ENCODE measurements at regions of chr17 and their contacts with region 1.

Region 1: DNA sequence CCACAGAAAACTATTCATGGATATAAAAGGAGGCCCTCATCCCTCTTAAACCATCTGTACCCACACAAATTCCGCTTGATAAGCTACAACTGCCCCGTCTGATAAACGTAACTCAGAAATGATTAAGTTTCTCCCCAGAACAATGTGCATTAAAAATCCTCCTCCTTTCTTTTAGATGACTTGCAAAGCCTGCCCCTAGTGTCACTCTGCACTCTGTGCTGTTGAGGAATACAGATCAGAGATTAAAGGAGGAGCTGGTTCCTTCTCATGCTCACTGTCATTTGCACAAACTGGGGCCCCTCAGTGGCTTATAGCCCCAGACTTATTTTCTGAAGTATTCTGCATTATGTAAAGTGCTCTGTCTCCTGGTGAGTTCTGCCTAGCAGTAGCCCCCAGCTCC is 33.3 kb downstream of the CDRT15 start:
- DNase-seq: no peak
- ATAC-seq: no peak

Region 2: GRCh38 chr17:14048169-14048568 is 155.2 kb before region 1 on chr17:
- intact Hi-C with region 1: no loop called
- DNase-seq: no peak
- ATAC-seq: no peak

Region 3: DNA sequence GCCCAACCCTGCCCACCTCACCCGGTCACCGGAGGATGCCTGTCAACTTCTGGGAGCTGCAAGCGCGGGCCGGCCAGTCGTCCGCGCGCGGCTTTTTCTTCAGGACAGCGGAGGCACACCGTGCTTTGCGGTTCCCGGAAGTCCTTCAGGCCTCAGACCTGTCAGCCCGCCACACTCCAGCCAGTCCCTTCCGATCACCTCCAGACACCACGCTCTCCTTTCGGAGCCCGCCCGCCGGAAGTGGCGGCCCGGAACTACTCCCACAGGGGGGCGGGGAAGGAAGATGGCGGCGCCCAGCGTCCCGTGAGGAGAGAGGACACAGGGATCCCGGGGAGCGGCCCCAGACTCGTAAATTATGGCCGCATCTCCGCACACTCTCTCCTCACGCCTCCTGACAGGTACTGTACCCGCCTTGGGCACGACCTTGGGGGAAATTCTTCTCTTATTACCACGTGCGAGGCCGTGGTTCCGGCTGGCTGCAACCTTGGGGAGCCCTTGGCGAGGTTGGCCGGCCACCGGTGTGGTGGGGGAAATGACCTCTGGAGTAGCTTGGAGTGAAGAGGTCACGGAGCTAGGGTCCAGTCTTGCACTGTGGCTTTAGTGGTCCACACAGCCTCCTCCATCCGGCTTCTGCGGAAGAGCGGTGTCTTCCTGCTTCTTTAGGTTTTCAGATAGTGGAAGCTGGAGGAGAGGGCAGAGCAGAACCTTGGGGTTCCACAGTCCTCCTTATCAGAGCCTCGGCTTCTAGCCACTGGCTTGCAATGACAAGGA is 134.0 kb before region 1 on chr17 and contains the start of gene COX10:
- intact Hi-C with region 1: loop called (anchors 10 kb)
- DNase-seq: peak; percentile 93
- ATAC-seq: peak; percentile 99
- total RNA-seq, gene COX10: 39.4 TPM

Region 4: GRCh38 chr17:14222620-14223019 is 19.2 kb after region 1 on chr17:
- intact Hi-C with region 1: no loop called
- DNase-seq: no peak
- ATAC-seq: no peak

Measured in Right ventricle myocardium superior (tissue), 1 donor.